ENCODE measurements at regions of chr13 and their contacts with region 1.

Region 1: DNA sequence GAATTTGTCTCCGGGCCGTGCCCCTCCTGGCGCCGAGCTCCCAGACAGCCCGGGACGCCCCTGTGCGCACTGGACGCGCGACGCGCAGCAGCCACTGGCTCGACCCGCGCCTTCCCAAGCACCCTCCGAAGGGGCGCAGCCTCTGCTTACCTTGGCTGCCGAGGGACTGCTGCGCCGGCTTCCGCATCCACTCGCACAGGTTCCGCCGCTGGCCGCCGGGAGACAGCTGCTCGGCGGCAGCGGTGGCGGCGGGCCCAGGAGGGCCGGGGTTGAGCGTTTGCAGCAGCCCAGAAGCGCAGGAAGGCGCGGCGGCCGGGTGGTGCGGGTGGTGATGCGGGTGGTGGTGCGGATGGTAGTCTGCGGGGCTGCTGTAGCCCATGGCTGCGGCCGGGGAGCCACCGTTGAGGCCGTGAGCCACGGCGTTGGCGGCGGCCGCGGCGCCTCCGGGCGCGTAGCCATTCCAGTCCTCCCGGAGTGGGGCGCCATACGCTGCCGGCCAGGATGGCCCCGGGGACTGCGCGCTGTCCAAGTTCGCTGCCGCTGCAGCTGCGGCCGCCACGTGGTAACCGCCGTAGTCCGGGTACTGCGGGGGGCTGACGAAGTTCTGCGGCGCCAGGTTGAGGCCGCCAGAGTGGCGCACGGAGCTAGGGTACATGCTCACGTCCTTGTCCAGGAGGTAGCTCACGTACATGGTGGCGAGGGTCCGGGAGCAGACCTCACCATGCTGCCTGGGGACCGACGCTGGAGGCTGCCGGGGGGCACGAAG is 616 bp downstream of the CDX2 start:
- DNase-seq: no peak
- H3K4me3 Mint-ChIP-seq: no peak overlapping the region
- H3K27ac Mint-ChIP-seq: no peak overlapping the region
- H3K4me1 Mint-ChIP-seq: peaks cover 25% of the 10 kb centered on the region
- H3K27me3 Mint-ChIP-seq: peaks cover 78% of the 10 kb centered on the region

Region 2: GRCh38 chr13:27792393-27793218 is 175.9 kb before region 1 on chr13 and contains the start of gene GSX1:
- CTCF ChIA-PET with region 1: no interaction called
- intact Hi-C with region 1: loop called (anchors 5 kb)
- DNase-seq: peak; percentile 69
- H3K4me3 Mint-ChIP-seq: peak within 1 kb of the TSS; percentile 71
- H3K27ac Mint-ChIP-seq: no peak within 1 kb of the TSS
- H3K4me1 Mint-ChIP-seq: peaks cover 38% of the 10 kb centered on the region
- H3K27me3 Mint-ChIP-seq: peaks cover 76% of the 10 kb centered on the region
- total RNA-seq, gene GSX1: not detected